Naive thymus-derived CD4-positive, alpha-beta T cell (primary cell): ENCODE measurements at regions of chr1 and their contacts with region 1.

Region 1: DNA sequence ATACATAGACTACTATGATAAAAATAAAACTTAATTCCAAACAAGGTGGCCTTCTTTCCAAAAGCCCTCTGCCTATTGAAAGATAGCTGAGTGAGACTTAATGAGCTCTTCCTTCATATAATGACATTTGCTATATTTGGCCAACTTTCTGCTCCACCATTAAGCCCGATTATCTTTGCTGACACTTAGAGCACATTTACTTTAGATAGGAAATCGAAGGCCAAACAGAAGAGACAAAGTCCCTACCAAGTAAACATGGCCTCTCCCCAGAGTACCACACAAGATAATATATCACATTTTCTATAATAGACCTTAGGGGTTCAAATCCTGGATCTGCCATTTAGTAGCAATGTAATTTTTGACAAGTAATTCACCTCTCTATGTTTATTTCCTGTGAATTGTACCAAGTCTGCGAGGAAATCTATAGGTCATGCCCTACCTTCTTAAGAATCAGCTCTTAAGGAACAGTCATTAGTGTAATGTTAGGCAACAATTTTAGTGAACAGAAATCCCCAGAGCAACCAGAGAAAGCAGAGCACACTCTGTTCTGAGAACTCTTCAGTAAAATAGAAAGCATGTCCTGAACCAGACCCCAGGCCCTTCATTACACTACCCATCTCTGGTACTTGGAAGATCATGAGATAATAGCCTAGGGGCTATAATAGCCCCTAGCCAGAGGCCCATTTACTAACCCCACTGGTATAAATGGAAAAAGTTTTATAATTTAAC is 17.3 kb upstream of the COA6 start:
- DNase-seq: no peak
- ATAC-seq: no peak
- H3K4me3 ChIP-seq: peak overlapping the region; percentile 60
- H3K4me3 Mint-ChIP-seq: peak overlapping the region in 6 of 10 donors; percentile 52 to 90 (median 78)
- H3K27ac ChIP-seq: no peak overlapping the region
- H3K27ac Mint-ChIP-seq: peak overlapping the region in 6 of 9 donors; percentile 35 to 92 (median 88)
- H3K4me1 ChIP-seq: peaks cover 0 to 6% of the 10 kb centered on the region in 2 donors
- H3K4me1 Mint-ChIP-seq: peaks cover 0 to 23% (median 15%) of the 10 kb centered on the region in 7 donors
- H3K27me3 ChIP-seq: no peaks in the 10 kb centered on the region
- H3K27me3 Mint-ChIP-seq: peaks cover 0 to 32% (median 5%) of the 10 kb centered on the region in 5 donors

Region 2: GRCh38 chr1:234326497-234327366 is 29.2 kb before region 1 on chr1:
- CTCF ChIA-PET with region 1: no interaction called
- POLR2A ChIA-PET with region 1: interaction called, 3 read pairs
- intact Hi-C with region 1: loop called in 1 of 2 experiments (anchors 2 kb)
- DNase-seq: peak; percentile 32 to 79 (median 67)
- ATAC-seq: peak; percentile 92
- H3K4me3 ChIP-seq: peak overlapping the region; percentile 64
- H3K4me3 Mint-ChIP-seq: peak overlapping the region; percentile 76 to 94 (median 90)
- H3K27ac ChIP-seq: peak overlapping the region; percentile 67
- H3K27ac Mint-ChIP-seq: peak overlapping the region; percentile 41 to 99 (median 85)
- H3K4me1 ChIP-seq: peaks cover 0 to 4% of the 10 kb centered on the region in 2 donors
- H3K4me1 Mint-ChIP-seq: peaks cover 23 to 36% (median 30%) of the 10 kb centered on the region in 7 donors
- H3K27me3 ChIP-seq: no peaks in the 10 kb centered on the region
- H3K27me3 Mint-ChIP-seq: peaks cover 4 to 23% (median 12%) of the 10 kb centered on the region in 5 donors